GM18951 (cell line): ENCODE measurements at regions of chr4 and their contacts with region 1.

Region 1: GRCh38 chr4:76087007-76087769 is 12.7 kb downstream of the ART3 start:
- POLR2A ChIP-seq: no peak

Region 2: GRCh38 chr4:75698162-75698962 is 388.8 kb before region 1 on chr4:
- in situ Hi-C with region 1: no loop called
- POLR2A ChIP-seq: no peak

Region 3: DNA sequence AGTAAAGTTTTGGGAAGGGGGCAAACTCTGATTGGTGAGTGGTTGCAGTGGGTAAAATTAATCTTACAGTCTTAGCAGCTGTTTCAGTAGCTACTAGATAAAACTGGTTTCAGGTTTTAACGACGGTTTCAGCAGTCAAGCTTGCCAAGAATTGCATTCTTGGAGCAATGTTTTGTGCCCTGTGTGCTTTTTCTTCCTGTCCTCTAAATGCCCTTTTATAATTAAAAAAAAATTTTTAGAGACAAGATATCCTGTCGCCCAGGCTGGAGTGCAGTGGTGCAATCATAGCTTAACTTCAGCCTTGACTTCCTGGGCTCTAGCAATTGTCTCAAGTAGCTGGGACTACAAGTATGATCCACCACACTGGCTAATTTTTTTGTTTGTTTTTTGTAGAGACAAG is 178.6 kb before region 1 on chr4:
- in situ Hi-C with region 1: loop called (anchors 10 kb)
- POLR2A ChIP-seq: no peak

Region 4: DNA sequence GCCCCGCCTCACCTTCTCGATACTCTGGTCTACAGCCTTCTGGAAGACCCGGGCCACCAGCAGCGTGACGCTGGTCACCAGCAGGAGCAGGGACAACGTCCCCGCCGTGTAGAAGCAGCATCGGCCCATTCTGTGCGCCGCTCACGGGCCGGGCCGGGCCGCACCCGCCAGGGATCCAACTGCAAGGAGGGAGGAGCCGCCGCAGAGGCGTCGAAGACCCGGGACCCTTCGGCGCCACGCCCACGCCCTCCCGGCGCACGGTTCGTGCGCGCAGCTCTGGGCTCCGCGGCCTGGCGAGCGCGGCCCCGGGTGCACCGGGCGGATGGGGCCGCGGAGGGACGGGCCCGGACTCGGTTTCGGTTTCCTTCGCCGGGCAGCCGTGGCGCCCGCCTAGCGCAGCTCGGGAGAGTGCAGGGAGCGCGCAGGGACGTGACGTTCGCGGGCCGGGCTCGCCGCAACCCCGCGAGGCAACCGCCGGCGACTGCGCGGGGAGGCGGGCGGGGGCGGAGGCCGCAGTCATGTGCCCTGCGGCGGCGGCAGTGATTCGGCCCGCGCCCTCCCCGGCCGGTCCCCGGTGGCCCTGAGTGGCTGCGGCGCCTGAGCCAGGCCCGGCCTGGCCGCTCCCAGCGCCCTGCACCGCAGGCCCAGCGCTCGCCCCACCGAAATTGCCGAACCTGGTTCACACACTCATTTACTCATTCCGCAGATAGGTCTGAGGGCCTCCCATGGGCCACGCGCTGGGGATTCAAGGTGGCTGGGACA is 126.4 kb after region 1 on chr4 and contains the start of gene SCARB2:
- in situ Hi-C with region 1: no loop called
- POLR2A ChIP-seq: peak; percentile 56